Transverse colon (tissue), 4 donors: ENCODE measurements at regions of chr1 and their contacts with region 1.

Region 1: GRCh38 chr1:178664278-178664677 is 60.8 kb upstream of the RALGPS2 start:
- DNase-seq: peak; percentile 14
- H3K4me3 ChIP-seq: no peak overlapping the region
- H3K27ac ChIP-seq: no peak overlapping the region
- H3K4me1 ChIP-seq: no peaks in the 10 kb centered on the region
- H3K27me3 ChIP-seq: no peaks in the 10 kb centered on the region
- CTCF ChIP-seq: no peak
- EP300 ChIP-seq: no peak
- POLR2A ChIP-seq: no peak

Region 2: DNA sequence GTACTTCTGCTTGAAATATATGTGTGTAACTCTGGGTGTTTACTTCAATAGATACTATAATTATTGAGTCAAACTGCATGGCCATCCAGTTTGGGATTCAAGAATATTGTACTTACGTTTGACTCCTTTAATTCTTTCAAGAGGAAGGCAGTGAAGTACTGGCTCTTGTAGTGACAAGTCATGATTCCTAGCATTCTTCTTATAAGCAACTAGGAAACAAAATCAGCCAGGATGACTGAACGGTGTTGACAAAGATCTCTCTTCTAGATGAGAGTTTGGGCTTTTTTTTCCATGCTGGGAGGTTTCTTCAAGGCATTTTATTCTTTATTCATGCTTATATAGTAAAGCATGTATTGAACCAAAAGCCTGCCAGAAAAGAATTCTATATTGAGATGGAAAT is 225.8 kb before region 1 on chr1:
- in situ Hi-C with region 1: no loop called
- intact Hi-C with region 1: no loop called
- DNase-seq: no peak
- H3K4me3 ChIP-seq: no peak overlapping the region
- H3K27ac ChIP-seq: no peak overlapping the region
- H3K4me1 ChIP-seq: no peaks in the 10 kb centered on the region
- H3K27me3 ChIP-seq: no peaks in the 10 kb centered on the region
- CTCF ChIP-seq: no peak
- EP300 ChIP-seq: no peak
- POLR2A ChIP-seq: no peak

Region 3: GRCh38 chr1:178694923-178695525 is 30.7 kb after region 1 on chr1:
- in situ Hi-C with region 1: no loop called
- intact Hi-C with region 1: loop called (anchors 1 kb)
- DNase-seq: no peak
- H3K4me3 ChIP-seq: no peak overlapping the region
- H3K27ac ChIP-seq: no peak overlapping the region
- H3K4me1 ChIP-seq: no peaks in the 10 kb centered on the region
- H3K27me3 ChIP-seq: no peaks in the 10 kb centered on the region
- CTCF ChIP-seq: no peak
- EP300 ChIP-seq: no peak
- POLR2A ChIP-seq: no peak